ENCODE measurements at regions of chr18 and their contacts with region 1.

Region 1: DNA sequence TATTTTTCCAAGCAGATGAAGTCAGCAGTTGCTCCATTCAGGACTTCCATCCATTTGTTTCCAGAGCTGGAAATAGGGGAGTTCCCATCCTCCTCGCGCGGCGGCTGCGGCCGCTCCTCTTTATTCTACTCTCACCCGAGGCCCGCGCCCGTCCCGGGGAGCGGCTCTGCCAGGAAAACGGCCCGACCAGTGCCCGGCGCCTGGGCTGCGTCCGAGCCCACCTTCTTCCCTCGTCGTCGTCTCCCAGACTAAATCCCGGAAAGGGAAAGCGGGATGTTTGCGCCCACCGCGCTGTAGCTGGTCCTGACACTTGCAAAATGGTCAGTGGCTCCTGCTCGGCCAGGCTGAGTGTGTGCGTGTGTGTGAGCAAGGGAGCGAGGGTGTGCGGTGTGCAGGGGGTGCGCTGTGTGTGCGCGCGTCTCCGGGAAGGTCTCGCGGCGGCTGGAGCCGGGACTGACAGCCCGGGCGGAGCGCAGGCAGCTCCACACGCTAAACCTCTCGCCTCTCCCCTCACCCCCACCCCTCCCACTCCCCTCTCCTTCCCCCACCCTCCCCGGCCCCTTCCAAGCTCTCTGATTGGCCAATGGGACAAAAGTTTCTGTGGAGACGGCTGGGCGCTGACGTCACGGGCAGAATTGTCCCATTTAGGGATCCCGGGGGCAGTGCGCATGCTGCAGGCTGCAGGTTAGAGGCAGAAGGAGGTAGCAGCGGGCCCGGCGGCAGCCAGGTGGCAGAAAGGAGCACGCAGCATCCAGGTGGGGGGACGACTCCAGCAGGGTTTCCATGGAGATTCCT is at the start of gene NOL4:
- DNase-seq: peak; percentile 99
- ATAC-seq: peak; percentile 82
- H3K4me3 Mint-ChIP-seq: peak within 1 kb of the TSS; percentile 82
- H3K27ac Mint-ChIP-seq: no peak within 1 kb of the TSS
- H3K4me1 Mint-ChIP-seq: peaks cover 19% of the 10 kb centered on the region
- H3K27me3 Mint-ChIP-seq: peaks cover 51% of the 10 kb centered on the region
- CTCF ChIP-seq: 0 out of 2 replicates have a peak, but pooled peaks have one; percentile 32
- total RNA-seq, gene NOL4: 0.57 to 1.4 TPM (median 1.2 TPM) in 3 replicates

Region 2: DNA sequence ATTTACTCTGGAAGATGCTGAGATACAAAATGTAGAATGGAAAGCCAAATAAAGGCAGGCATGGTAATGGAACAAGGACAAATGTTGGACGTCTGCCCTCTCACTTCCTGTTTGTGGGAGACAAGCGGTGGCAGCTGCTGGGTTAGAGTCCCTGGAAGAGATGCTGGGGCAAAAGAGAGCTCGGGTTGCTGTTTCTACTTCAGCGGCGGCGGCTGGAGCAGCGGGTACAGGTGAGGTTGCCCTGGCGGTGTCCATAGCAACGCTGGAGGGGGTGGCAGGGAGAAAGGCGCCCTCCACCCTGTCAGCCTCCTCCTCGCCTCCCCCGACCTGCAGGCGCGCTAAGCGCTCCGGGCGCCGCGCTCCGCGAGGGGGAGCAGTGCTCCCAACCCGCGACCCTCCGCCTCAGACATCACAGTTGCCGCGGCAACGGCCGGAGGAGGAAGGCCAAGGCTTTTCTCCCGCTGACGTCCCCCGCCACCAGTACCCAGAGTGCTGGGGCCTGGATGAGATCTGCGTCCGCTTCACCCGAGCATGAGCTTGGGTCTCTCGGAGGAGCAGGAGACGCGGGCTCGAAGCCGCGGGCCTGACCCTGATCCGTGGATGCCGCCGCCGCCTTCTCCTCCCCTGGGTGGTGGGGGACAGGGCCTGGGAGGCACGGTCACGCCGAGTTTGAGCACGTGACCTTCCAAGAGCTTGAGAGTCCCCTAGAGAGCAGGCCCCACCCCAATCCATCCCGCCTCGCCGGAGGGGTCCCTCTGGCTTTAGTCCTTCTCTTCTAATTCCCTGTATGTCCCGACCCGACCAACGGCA is 65.5 kb before region 1 on chr18:
- CTCF ChIA-PET with region 1: interaction called, 24 read pairs
- POLR2A ChIA-PET with region 1: no interaction called
- DNase-seq: peak; percentile 88
- ATAC-seq: peak; percentile 96
- H3K4me3 Mint-ChIP-seq: peak overlapping the region; percentile 77
- H3K27ac Mint-ChIP-seq: no peak overlapping the region
- H3K4me1 Mint-ChIP-seq: peaks cover 8% of the 10 kb centered on the region
- H3K27me3 Mint-ChIP-seq: peaks cover 60% of the 10 kb centered on the region
- CTCF ChIP-seq: no peak

Region 3: GRCh38 chr18:34258176-34258575 is 33.6 kb after region 1 on chr18:
- CTCF ChIA-PET with region 1: interaction called, 10 read pairs
- POLR2A ChIA-PET with region 1: no interaction called
- DNase-seq: no peak
- ATAC-seq: peak; percentile 75
- H3K4me3 Mint-ChIP-seq: no peak overlapping the region
- H3K27ac Mint-ChIP-seq: no peak overlapping the region
- H3K4me1 Mint-ChIP-seq: peaks cover 8% of the 10 kb centered on the region
- H3K27me3 Mint-ChIP-seq: no peaks in the 10 kb centered on the region
- CTCF ChIP-seq: no peak

Region 4: GRCh38 chr18:34322365-34323289 is 98.0 kb after region 1 on chr18:
- CTCF ChIA-PET with region 1: interaction called, 39 read pairs
- POLR2A ChIA-PET with region 1: no interaction called
- DNase-seq: peak; percentile 66
- ATAC-seq: peak; percentile 55; the same call in 1 of the 2 replicates
- H3K4me3 Mint-ChIP-seq: no peak overlapping the region
- H3K27ac Mint-ChIP-seq: no peak overlapping the region
- H3K4me1 Mint-ChIP-seq: peaks cover 7% of the 10 kb centered on the region; the same call in 1 of the 2 replicates
- H3K27me3 Mint-ChIP-seq: no peaks in the 10 kb centered on the region
- CTCF ChIP-seq: peak; percentile 52; the same call in 1 of the 2 replicates

Region 5: GRCh38 chr18:34809451-34810072 is 584.9 kb after region 1 on chr18:
- CTCF ChIA-PET with region 1: interaction called, 12 read pairs
- POLR2A ChIA-PET with region 1: no interaction called
- DNase-seq: peak; percentile 75
- ATAC-seq: peak; percentile 71
- H3K4me3 Mint-ChIP-seq: no peak overlapping the region
- H3K27ac Mint-ChIP-seq: no peak overlapping the region
- H3K4me1 Mint-ChIP-seq: peaks cover 6% of the 10 kb centered on the region
- H3K27me3 Mint-ChIP-seq: no peaks in the 10 kb centered on the region
- CTCF ChIP-seq: peak; percentile 65

Measured in WTC11 (cell line).